ENCODE measurements at regions of chr7 and their contacts with region 1.

Region 1: DNA sequence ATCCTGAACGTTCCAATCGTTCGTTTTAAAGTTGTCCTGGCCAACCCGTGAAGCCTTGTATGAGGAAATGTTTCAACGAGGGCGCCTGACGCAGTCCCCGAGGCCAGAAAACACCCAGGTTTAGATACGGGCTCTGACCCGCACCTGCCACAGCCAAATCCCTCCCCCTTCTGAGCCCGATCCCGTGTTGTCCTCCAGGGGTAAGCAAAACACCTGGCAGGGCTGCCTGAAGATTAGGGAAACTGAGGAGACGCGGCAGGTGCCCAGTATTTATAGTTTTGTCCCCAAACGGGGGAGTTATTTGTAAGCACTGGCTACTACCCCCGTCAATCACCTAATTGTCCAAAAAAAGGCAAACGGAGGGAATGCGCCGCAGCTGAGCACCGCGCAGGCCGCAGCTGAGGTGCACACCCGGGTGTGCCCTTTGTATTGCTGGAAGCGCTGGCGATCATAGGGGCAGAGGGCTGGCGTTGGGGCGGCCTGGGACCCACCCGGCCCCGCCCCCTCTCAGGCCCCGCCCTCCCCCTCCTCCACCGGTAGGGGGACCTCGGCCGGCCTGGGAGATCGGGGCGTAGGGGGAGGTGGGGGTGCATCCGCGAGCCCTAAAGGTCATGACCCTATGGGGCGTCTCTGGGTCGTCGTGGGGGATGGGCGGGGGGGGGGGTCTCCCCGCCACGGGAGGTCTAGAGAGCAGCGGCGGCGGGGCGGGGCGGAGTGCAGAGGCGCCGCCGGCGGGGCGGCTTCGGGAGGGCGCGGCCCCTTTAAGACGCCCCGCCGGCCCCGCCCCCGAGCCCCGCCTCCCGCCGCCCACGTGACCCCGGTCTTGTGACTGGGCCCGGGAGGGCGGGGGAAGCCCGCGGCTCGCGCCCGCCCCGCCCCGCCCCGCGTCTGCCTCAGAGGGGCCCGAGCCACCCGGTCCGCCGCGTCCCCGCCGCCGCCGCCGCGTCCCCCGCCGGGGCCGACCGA is at the start of gene BRI3:
- DNase-seq: peak; percentile 89 to 93
- ATAC-seq: peak; percentile 45 to 51
- H3K4me3 ChIP-seq: peak within 1 kb of the TSS; percentile 84 to 98 (median 92)
- H3K27ac ChIP-seq: peak within 1 kb of the TSS; percentile 96 to 100 (median 99)
- H3K4me1 ChIP-seq: peaks cover 29 to 30% of the 10 kb centered on the region in 2 donors
- H3K27me3 ChIP-seq: no peaks in the 10 kb centered on the region
- CTCF ChIP-seq: no peak
- POLR2A ChIP-seq: peak; percentile 87 to 88
- total RNA-seq, gene BRI3: 60.5 to 180 (median 114) TPM

Region 2: GRCh38 chr7:98178347-98178746 is 102.7 kb before region 1 on chr7:
- in situ Hi-C with region 1: loop called in 1 of 4 experiments (anchors 10 kb)
- intact Hi-C with region 1: loop called (anchors 1 kb)
- DNase-seq: peak; percentile 89 to 95
- ATAC-seq: peak; percentile 65 to 72
- H3K4me3 ChIP-seq: peak overlapping the region; percentile 36 to 54 (median 44)
- H3K27ac ChIP-seq: peak overlapping the region; percentile 89 to 95 (median 90)
- H3K4me1 ChIP-seq: peaks cover 46 to 47% of the 10 kb centered on the region in 2 donors
- H3K27me3 ChIP-seq: no peaks in the 10 kb centered on the region
- CTCF ChIP-seq: no peak
- POLR2A ChIP-seq: peak; percentile 50 to 51

Region 3: DNA sequence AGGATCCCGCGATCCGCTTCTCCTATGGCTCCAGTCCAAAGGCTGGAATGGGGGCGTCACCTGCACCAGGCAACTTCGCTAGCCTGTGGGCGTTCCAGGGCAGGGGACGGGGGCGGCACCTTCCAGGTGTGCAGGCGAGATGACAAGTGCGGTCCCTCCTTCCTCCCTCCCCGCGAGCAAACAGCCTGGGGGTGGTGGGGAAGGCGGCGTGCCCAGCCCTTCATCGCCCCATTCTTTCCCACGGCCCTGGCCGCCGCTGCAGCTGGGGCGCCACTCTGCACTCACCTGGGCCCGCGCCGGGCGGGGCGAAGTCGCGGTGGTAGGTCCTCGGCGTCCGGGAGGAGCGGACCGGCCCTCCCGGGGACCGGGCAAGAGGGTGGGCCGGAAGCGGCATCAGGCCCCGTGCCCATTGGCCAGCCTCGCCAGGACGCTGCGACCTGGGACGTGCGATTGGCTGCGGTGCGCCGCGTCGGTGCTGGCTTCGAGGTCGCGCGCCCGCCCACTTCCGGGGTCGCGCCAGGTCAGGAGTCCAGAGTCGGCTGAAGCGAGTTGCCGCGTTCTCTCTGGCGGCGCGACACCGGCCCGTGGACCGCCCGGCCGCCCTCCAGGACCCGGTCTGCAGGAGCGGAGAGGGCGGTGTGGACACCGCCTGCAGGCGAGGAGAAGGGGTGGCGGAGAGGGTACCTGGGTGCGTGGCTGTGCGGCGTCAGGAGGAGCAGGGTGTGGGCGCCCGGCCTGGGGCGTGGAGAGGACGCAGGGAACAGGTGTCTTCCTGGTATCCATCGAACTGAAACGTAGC is 29.0 kb before region 1 on chr7 and contains the start of gene TECPR1:
- in situ Hi-C with region 1: no loop called
- intact Hi-C with region 1: loop called (anchors 1 kb)
- DNase-seq: peak; percentile 94 to 95
- ATAC-seq: peak; percentile 94 to 96
- H3K4me3 ChIP-seq: peak within 1 kb of the TSS; percentile 74 to 93 (median 86)
- H3K27ac ChIP-seq: peak within 1 kb of the TSS; percentile 85 to 94 (median 88)
- H3K4me1 ChIP-seq: peaks cover 18 to 28% of the 10 kb centered on the region in 2 donors
- H3K27me3 ChIP-seq: no peaks in the 10 kb centered on the region
- CTCF ChIP-seq: peak in 1 of 5 experiments; percentile 18
- POLR2A ChIP-seq: peak; percentile 45 to 60
- total RNA-seq, gene TECPR1: 16.0 to 59.6 (median 33.9) TPM

Region 4: DNA sequence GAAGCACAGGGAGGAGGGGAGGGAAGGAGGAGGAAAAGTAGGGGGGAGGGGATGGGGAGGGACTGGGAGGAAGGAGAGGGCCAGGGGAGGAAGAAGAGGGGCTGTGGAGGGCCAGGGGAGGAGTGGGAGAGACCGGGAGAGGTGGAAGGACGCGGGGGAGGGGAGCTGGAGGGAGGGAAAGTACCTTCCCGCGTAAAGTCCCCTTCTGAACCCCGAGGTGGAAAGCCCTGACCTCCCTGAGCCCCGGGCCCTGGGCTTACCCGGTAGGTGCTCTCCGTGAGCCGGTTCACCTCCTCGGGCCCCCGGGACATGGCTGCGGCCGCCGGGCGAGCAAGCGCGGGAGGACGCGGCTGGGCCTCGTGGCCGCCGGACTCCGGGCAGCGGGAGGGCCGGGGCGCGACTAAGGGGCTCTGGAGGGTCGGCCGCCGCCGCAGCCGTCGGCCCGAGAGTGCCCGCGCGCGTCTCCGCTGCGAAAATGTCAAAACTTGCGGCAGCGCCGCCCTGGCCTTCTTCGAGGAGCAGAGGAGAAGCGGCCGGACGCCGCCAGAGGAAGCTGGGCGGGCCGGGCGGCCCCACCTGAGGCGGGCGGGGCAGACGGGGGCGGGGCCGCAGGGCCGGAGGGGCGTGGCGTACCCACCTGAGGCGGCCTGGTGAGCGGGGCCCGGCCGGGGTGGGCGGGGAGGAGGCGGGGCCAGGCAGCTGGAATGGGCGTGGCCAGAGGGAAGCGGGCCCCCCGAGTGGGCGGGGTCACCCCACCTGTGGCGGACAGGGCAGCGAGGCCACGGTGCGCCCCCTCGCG is 119.7 kb after region 1 on chr7 and contains the start of gene BAIAP2L1:
- in situ Hi-C with region 1: no loop called
- intact Hi-C with region 1: loop called (anchors 5 kb)
- DNase-seq: peak; percentile 24 to 66
- ATAC-seq: peak; percentile 63 to 84
- H3K4me3 ChIP-seq: peak within 1 kb of the TSS; percentile 36 to 74 (median 56)
- H3K27ac ChIP-seq: peak within 1 kb of the TSS; percentile 30 to 74 (median 62)
- H3K4me1 ChIP-seq: peaks cover 10 to 11% of the 10 kb centered on the region in 2 donors
- H3K27me3 ChIP-seq: peaks cover 0 to 25% (median 20%) of the 10 kb centered on the region in 3 donors
- CTCF ChIP-seq: no peak
- POLR2A ChIP-seq: peak in 1 of 2 donors; percentile 24
- total RNA-seq, gene BAIAP2L1: 0.59 to 3.8 (median 1.2) TPM

Region 5: DNA sequence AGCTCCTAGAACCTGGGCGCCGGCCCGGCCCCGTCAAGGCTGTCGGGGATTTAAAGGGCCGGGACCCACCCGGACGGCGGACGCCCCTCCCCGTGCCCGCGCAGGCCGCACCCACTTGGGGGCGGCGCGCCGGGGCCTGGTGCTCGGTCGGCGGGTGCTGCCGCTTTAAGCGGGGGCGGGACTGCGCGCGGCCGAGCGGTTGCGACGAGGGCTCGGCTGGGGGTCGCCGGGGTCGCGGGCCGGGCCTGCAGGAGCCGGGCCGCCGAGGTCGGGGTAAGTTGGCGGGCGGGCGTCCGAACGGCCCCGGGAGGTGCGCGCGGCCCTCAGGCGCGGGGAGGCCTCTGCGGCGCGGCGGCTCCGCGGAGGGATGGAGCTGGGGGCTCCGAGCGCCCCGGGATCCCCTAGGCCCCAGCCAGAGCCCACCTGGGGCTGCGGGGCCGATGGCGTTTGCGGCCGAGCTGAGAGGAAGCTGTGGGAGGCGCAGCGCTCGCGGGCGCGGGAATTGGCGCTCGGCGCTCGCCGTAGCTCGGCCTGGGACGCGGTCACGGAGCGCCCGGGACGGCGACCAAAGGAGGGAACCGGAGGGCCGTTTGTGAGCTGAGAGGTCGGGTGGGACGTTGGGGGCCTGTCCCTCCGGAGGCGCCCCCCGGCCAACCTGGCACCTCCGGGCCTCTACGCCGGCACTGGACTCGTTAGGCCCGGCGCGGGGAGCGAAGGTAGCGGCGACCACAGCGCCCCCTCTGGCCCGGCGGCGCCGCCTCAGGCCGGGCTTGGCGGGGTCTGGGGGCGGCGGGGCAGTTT is 597.5 kb after region 1 on chr7 and contains the start of gene TRRAP:
- in situ Hi-C with region 1: no loop called
- intact Hi-C with region 1: loop called (anchors 10 kb)
- DNase-seq: peak; percentile 23 to 60
- ATAC-seq: peak; percentile 78 to 79
- H3K4me3 ChIP-seq: peak within 1 kb of the TSS; percentile 91 to 98 (median 92)
- H3K27ac ChIP-seq: peak within 1 kb of the TSS; percentile 88 to 98 (median 97)
- H3K4me1 ChIP-seq: peaks cover 13 to 16% of the 10 kb centered on the region in 2 donors
- H3K27me3 ChIP-seq: no peaks in the 10 kb centered on the region
- CTCF ChIP-seq: peak; percentile 88 to 98 (median 97)
- POLR2A ChIP-seq: peak; percentile 54 to 61
- total RNA-seq, gene TRRAP: 15.2 to 18.8 (median 17.0) TPM

Region 6: GRCh38 chr7:98922393-98923187 is 641.5 kb after region 1 on chr7:
- in situ Hi-C with region 1: no loop called
- intact Hi-C with region 1: no loop called
- DNase-seq: peak in 1 of 2 donors; percentile 18
- ATAC-seq: peak in 1 of 2 donors; percentile 66
- H3K4me3 ChIP-seq: no peak overlapping the region
- H3K27ac ChIP-seq: peak overlapping the region in 2 of 4 donors; percentile 14 to 36
- H3K4me1 ChIP-seq: no peaks in the 10 kb centered on the region
- H3K27me3 ChIP-seq: no peaks in the 10 kb centered on the region
- CTCF ChIP-seq: no peak
- POLR2A ChIP-seq: no peak